IMR-90 (cell line): ENCODE measurements at regions of chr16 and their contacts with region 1.

Region 1: DNA sequence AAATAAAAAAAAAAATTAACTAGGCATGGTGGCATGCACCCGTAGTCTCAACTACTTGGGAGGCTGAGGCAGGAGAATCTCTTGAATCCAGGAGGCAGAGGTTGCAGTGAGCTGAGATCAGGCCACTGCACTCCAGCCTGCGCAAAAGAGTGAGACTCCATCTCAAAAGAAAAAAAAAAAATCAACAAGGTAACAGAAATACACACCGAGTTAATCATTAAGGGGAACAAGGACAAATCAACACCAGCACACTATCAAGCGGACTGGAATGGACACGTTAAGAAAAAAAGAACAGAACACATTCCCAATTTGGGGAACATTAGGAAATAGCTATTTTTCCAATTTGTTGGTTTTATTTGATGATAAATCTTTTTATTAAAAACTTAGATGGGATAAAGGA is 28.4 kb upstream of the GLG1 start:
- DNase-seq: no peak
- ATAC-seq: no peak
- H3K4me3 ChIP-seq: no peak overlapping the region
- H3K27ac ChIP-seq: no peak overlapping the region
- H3K4me1 ChIP-seq: no peaks in the 10 kb centered on the region
- H3K27me3 ChIP-seq: no peaks in the 10 kb centered on the region
- CTCF ChIP-seq: no peak
- POLR2A ChIP-seq: no peak
- RAD21 ChIP-seq: no peak

Region 2: GRCh38 chr16:74448992-74449434 is 186.3 kb before region 1 on chr16:
- CTCF ChIA-PET with region 1: no interaction called
- POLR2A ChIA-PET with region 1: interaction called, 16 read pairs
- dilution Hi-C with region 1: no loop called
- in situ Hi-C with region 1: no loop called
- intact Hi-C with region 1: no loop called
- DNase-seq: peak; percentile 95
- ATAC-seq: peak; percentile 98
- H3K4me3 ChIP-seq: no peak overlapping the region
- H3K27ac ChIP-seq: peak overlapping the region; percentile 55; the same call in 1 of the 2 replicates
- H3K4me1 ChIP-seq: peaks cover 10% of the 10 kb centered on the region
- H3K27me3 ChIP-seq: no peaks in the 10 kb centered on the region
- CTCF ChIP-seq: no peak
- POLR2A ChIP-seq: no peak
- RAD21 ChIP-seq: no peak